Heart left ventricle (tissue), 16 donors: ENCODE measurements at regions of chr2 and their contacts with region 1.

Region 1: DNA sequence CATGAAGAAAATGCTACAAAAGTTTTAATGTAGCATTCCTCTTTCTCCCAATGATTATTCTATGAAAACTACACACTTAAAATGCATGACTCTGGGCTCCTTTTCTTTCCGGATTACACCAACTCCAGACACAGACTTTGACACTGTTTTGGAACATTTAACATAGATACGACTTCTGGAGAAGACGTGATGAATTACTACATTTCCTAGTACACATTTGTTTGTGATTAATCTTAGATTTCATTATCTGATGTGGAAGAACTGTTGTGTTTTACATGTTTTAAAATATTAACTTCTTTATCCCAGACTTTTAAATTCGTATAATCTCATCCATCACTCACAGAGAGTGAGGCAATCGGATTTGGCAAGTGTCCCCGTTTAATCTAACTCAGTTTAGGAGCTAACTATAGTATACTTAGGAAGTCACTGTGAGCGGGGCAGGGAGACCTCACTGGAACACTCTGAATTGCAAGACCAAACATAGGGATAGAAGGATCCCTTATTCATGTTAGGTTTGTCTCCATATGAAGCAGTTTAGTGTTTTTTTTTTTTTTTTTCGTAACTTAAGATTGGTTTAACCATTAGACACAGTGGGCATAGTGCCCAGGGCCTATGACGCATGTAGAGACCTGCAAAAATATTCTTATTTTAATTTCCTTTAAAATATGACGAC is 66.7 kb downstream of the PDE1A start:
- DNase-seq: peak in 4 of 5 donors; percentile 26 to 44 (median 34)
- ATAC-seq: peak; percentile 62 to 89 (median 66)
- H3K4me3 ChIP-seq: peak overlapping the region in 2 of 12 donors; percentile 5 to 16
- H3K27ac ChIP-seq: peak overlapping the region in 10 of 12 donors; percentile 4 to 68 (median 44)
- H3K4me1 ChIP-seq: peaks cover 0 to 17% (median 0%) of the 10 kb centered on the region in 12 donors
- H3K27me3 ChIP-seq: no peaks in the 10 kb centered on the region
- CTCF ChIP-seq: no peak
- POLR2A ChIP-seq: no peak

Region 2: GRCh38 chr2:182240862-182241371 is 119.2 kb before region 1 on chr2:
- intact Hi-C with region 1: loop called in 1 of 10 experiments (anchors 10 kb)
- DNase-seq: peak in 1 of 5 donors; percentile 28
- ATAC-seq: peak; percentile 35 to 72 (median 58)
- H3K4me3 ChIP-seq: no peak overlapping the region
- H3K27ac ChIP-seq: peak overlapping the region in 1 of 12 donors; percentile 21
- H3K4me1 ChIP-seq: peaks cover 0 to 14% (median 4%) of the 10 kb centered on the region in 12 donors
- H3K27me3 ChIP-seq: no peaks in the 10 kb centered on the region
- CTCF ChIP-seq: peak in 10 of 12 donors; percentile 18 to 52 (median 32)
- POLR2A ChIP-seq: no peak

Region 3: DNA sequence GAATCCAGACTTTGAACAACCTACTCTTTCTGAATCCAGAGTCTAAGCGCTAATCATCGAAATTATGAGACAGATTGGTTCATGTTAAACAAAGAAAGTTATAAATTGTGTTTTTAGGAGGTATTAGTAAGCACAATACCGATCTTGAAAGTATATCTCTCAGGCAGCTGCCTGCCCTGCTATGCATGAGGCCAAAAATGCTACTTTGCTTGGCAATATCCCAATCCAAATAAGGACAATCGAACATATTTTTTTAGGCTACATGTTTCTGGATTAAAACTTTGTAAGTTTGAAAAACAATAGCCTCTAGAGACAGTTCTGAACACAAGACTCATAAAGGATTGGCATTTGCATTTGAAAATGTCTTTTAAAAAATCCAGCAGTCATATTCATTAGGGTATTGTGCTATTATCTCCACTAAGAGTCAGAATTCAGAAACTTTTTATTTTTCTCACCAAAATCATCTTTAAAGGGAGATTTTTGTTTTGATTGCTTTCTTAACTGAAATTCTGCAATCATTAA is 100.4 kb before region 1 on chr2:
- intact Hi-C with region 1: loop called in 1 of 10 experiments (anchors 10 kb)
- DNase-seq: no peak
- ATAC-seq: peak in 1 of 4 donors; percentile 36
- H3K4me3 ChIP-seq: no peak overlapping the region
- H3K27ac ChIP-seq: peak overlapping the region in 4 of 12 donors; percentile 11 to 25 (median 16)
- H3K4me1 ChIP-seq: peaks cover 0 to 15% (median 0%) of the 10 kb centered on the region in 12 donors
- H3K27me3 ChIP-seq: no peaks in the 10 kb centered on the region
- CTCF ChIP-seq: no peak
- POLR2A ChIP-seq: no peak

Region 4: GRCh38 chr2:182559623-182560022 is 199.5 kb after region 1 on chr2:
- intact Hi-C with region 1: no loop called
- DNase-seq: no peak
- ATAC-seq: no peak
- H3K4me3 ChIP-seq: no peak overlapping the region
- H3K27ac ChIP-seq: no peak overlapping the region
- H3K4me1 ChIP-seq: peaks cover 0 to 4% (median 0%) of the 10 kb centered on the region in 12 donors
- H3K27me3 ChIP-seq: no peaks in the 10 kb centered on the region
- CTCF ChIP-seq: no peak
- POLR2A ChIP-seq: no peak